Mammary epithelial cell (primary cell): ENCODE measurements at regions of chr5 and their contacts with region 1.

Region 1: GRCh38 chr5:36397901-36398536 is 96.3 kb upstream of the RANBP3L start:
- DNase-seq: peak; percentile 19
- H3K4me3 ChIP-seq: no peak overlapping the region
- H3K27ac ChIP-seq: no peak overlapping the region
- H3K4me1 ChIP-seq: no peaks in the 10 kb centered on the region
- H3K27me3 ChIP-seq: no peaks in the 10 kb centered on the region
- CTCF ChIP-seq: peak; percentile 37 to 56

Region 2: GRCh38 chr5:35963381-35963843 is 434.6 kb before region 1 on chr5:
- CTCF ChIA-PET with region 1: no interaction called
- dilution Hi-C with region 1: no loop called
- in situ Hi-C with region 1: no loop called
- intact Hi-C with region 1: loop called (anchors 2 kb)
- DNase-seq: peak; percentile 7
- H3K4me3 ChIP-seq: no peak overlapping the region
- H3K27ac ChIP-seq: no peak overlapping the region
- H3K4me1 ChIP-seq: no peaks in the 10 kb centered on the region
- H3K27me3 ChIP-seq: no peaks in the 10 kb centered on the region
- CTCF ChIP-seq: peak; percentile 50 to 61

Region 3: GRCh38 chr5:36252722-36253365 is 145.2 kb before region 1 on chr5:
- CTCF ChIA-PET with region 1: no interaction called
- dilution Hi-C with region 1: no loop called
- in situ Hi-C with region 1: loop called in 1 of 2 experiments (anchors 25 kb)
- intact Hi-C with region 1: no loop called
- DNase-seq: no peak
- H3K4me3 ChIP-seq: no peak overlapping the region
- H3K27ac ChIP-seq: no peak overlapping the region
- H3K4me1 ChIP-seq: no peaks in the 10 kb centered on the region
- H3K27me3 ChIP-seq: no peaks in the 10 kb centered on the region
- CTCF ChIP-seq: no peak

Region 4: GRCh38 chr5:36285837-36286615 is 112.0 kb before region 1 on chr5:
- CTCF ChIA-PET with region 1: no interaction called
- dilution Hi-C with region 1: loop called (anchors 10 kb)
- in situ Hi-C with region 1: no loop called
- intact Hi-C with region 1: no loop called
- DNase-seq: no peak
- H3K4me3 ChIP-seq: no peak overlapping the region
- H3K27ac ChIP-seq: no peak overlapping the region
- H3K4me1 ChIP-seq: no peaks in the 10 kb centered on the region
- H3K27me3 ChIP-seq: peaks cover 3% of the 10 kb centered on the region
- CTCF ChIP-seq: no peak

Region 5: DNA sequence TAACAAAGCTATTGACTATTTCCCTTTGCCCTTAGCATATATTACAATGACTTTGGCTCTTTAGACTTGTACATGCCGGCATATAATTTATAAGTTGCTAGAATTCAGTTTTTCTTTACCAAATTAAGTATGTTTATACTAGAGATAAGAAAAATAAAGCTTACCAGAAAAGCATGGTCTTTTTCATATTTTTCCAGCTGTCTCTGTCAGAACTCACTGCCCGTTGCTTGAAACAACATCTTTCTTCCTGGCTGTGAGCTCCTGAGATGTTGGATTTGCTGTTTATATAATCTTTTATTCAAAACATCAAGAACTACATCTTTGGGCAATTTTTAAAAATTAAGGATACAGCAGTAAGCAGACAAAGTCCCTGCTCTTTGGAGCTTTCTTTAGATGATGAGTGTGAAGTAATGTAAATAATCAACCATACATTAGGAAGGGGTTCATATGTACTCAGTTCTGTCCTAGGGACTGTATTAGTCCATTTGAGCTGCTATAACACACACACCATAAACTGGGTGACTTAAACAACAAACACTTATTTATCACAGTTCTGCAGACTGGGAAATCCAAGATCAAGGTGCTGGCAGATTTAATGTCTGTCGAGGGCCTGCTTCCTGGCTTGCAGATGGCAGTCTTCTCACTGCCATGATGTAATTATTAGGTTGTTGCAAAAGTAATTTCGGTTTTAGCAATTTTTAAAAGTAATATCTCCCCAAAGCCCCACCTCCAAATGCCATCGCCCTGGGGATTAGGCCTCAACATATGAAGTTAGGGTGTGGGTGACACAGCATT is 50.9 kb before region 1 on chr5:
- CTCF ChIA-PET with region 1: no interaction called
- dilution Hi-C with region 1: loop called (anchors 5 kb)
- in situ Hi-C with region 1: no loop called
- intact Hi-C with region 1: no loop called
- DNase-seq: no peak
- H3K4me3 ChIP-seq: no peak overlapping the region
- H3K27ac ChIP-seq: no peak overlapping the region
- H3K4me1 ChIP-seq: no peaks in the 10 kb centered on the region
- H3K27me3 ChIP-seq: peaks cover 4% of the 10 kb centered on the region
- CTCF ChIP-seq: no peak

Region 6: DNA sequence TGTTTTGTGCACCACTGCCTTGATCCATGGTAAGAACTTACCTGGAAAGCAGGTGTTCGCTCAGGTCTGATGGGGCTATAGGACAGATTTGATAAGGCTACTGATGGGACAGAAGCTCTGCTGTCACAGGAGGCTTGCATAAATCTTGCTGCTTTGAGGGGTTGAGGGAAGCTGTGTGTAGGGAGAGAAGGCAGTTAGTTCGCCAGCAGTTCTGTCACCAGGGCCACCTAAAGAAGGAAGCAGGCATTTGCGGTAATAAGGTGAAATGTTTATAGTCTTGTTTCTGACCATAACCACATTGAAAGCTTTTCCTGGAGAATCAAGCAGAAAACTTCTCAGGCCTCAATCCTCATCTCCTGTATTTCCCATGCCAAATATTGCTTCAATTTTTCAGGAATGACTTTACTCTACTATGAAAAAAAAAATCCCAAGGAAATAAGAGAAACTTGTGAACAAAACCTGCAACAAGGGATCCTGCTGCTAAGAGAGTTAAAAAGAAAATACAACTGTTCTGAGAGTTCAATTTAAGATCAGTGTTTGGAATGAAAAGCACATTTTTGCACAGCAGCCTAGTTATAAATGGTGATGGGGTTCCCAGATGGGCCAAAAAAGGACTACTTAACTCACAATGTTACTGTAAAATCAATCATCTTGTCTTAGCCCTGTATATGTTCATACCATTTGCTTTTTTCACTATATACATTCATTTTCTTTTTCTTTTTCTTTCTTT is 25.7 kb after region 1 on chr5:
- CTCF ChIA-PET with region 1: no interaction called
- dilution Hi-C with region 1: no loop called
- in situ Hi-C with region 1: no loop called
- intact Hi-C with region 1: no loop called
- DNase-seq: no peak
- H3K4me3 ChIP-seq: no peak overlapping the region
- H3K27ac ChIP-seq: no peak overlapping the region
- H3K4me1 ChIP-seq: peaks cover 2% of the 10 kb centered on the region
- H3K27me3 ChIP-seq: no peaks in the 10 kb centered on the region
- CTCF ChIP-seq: no peak

Region 7: DNA sequence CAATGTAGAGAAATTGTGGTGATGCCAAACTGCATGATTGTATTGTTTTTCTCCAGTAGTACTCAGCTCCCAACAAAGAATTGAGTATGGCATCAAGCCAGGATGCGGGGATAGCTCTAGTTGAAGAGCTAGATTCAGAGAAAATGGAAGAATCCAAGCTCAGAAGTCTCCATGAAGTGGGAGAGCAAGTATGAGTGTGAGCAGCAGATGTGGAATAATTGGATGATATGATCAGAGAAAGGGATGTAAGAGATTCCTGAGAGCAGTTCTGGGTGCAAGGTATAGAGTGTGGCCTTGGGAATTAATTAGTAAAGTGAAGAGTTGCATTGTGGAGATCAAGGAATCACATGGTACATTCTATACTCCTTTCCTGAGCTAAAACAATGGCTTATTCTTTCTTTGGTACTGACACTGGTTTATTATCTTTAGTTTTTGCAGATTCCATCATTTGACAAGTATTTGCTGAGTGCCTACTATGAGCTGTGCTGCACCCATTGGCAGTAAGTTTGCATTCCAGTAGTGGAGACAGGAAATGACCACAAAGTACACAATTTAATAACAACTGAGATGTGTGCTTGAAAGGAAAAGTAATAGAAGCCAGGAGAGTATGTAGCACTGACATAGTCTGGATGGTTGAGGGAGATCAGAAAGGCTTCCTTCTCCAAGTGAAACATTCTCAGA is 674.0 kb after region 1 on chr5:
- CTCF ChIA-PET with region 1: no interaction called
- dilution Hi-C with region 1: no loop called
- in situ Hi-C with region 1: no loop called
- intact Hi-C with region 1: no loop called
- DNase-seq: peak; percentile 72
- H3K4me3 ChIP-seq: no peak overlapping the region
- H3K27ac ChIP-seq: peak overlapping the region; percentile 30
- H3K4me1 ChIP-seq: peaks cover 16% of the 10 kb centered on the region
- H3K27me3 ChIP-seq: no peaks in the 10 kb centered on the region
- CTCF ChIP-seq: no peak